H1 (cell line): ENCODE measurements at regions of chr13 and their contacts with region 1.

Region 1: DNA sequence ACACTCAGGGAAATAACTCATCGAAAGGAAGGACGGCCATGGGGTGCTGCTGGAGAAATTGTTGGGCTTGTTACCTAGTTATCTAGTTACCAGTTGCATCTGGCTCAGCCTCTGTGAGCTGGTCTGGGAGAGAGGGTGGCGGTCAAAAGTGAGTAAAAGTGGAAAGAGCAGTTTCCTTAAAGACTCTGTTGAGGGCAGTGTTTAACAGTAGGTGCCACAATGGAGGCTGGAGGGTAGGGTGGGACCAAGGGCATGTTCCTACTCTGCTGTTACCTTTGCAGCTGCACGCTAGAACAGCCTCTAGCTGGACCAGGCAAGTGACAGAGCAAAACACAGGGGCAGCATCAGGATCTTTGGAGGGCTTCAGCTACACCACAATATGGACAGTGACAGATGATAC is 228.8 kb upstream of the STARD13 start:
- DNase-seq: no peak
- H3K4me3 ChIP-seq: no peak overlapping the region
- H3K27ac ChIP-seq: no peak overlapping the region
- H3K4me1 ChIP-seq: peaks cover 1 to 12% (median 6%) of the 10 kb centered on the region in 4 experiments; a peak in 4 of 7 replicates
- H3K27me3 ChIP-seq: no peaks in the 10 kb centered on the region
- CTCF ChIP-seq: peak in 2 of 3 experiments; percentile 50 to 53; a peak in 3 of 4 replicates
- EP300 ChIP-seq: no peak
- POLR2A ChIP-seq: no peak
- RAD21 ChIP-seq: peak; percentile 72 to 77

Region 2: DNA sequence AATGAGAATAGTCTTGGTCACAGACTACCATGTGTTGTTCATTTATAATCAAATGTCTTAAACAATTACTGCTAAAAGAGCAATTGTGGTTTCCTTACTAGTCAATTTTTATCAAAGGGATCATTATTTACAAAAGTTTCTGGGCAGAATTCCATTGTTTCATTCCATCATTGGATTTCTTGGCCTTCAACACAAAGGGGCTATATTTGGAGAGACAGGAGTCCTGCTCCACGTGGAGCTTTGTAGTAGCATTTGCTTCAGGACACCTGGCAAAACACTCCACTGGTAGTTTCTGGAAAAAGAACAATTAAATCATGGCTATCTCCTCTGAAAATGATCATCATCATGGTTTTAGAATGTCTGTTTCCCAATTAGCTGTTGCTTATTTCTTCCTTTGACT is 206.5 kb before region 1 on chr13:
- CTCF ChIA-PET with region 1: no interaction called
- POLR2A ChIA-PET with region 1: no interaction called
- DNase-seq: no peak
- H3K4me3 ChIP-seq: no peak overlapping the region
- H3K27ac ChIP-seq: no peak overlapping the region
- H3K4me1 ChIP-seq: no peaks in the 10 kb centered on the region
- H3K27me3 ChIP-seq: no peaks in the 10 kb centered on the region
- CTCF ChIP-seq: no peak
- EP300 ChIP-seq: no peak
- POLR2A ChIP-seq: no peak
- RAD21 ChIP-seq: no peak

Region 3: DNA sequence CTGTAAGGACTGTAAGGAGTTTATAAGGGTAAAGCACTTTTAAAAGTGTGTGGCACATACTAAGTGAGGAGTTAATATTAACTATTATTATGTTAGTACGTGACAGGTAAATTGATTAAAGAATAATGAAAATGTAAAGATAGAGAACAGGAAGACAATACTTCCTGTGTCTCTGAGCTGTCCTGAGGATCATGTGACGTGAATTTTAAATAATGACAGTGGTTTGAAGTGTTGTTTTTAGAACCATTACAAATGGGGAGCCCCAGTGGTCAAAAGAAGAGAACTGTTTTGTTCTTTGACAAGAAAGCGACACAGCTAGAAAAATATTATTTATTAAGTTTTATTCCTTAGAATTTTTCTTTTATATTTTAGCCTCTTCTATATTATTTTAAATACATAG is 12.4 kb after region 1 on chr13:
- CTCF ChIA-PET with region 1: interaction called, 12 read pairs
- POLR2A ChIA-PET with region 1: no interaction called
- DNase-seq: no peak
- H3K4me3 ChIP-seq: no peak overlapping the region
- H3K27ac ChIP-seq: no peak overlapping the region
- H3K4me1 ChIP-seq: peaks cover 0 to 3% (median 1%) of the 10 kb centered on the region in 4 experiments; a peak in 2 of 7 replicates
- H3K27me3 ChIP-seq: no peaks in the 10 kb centered on the region
- CTCF ChIP-seq: no peak
- EP300 ChIP-seq: no peak
- POLR2A ChIP-seq: no peak
- RAD21 ChIP-seq: no peak